GM12878 (cell line): ENCODE measurements at regions of chr11 and their contacts with region 1.

Region 1: GRCh38 chr11:88231894-88232482 is 56.7 kb upstream of the RAB38 start:
- DNase-seq: no peak
- ATAC-seq: peak; percentile 97
- H3K4me3 ChIP-seq: no peak overlapping the region
- H3K27ac ChIP-seq: no peak overlapping the region
- H3K4me1 ChIP-seq: no peaks in the 10 kb centered on the region
- H3K27me3 ChIP-seq: no peaks in the 10 kb centered on the region
- CTCF ChIP-seq: peak; percentile 45 to 68 (median 62)
- EP300 ChIP-seq: no peak
- POLR2A ChIP-seq: no peak
- RAD21 ChIP-seq: peak; percentile 76

Region 2: DNA sequence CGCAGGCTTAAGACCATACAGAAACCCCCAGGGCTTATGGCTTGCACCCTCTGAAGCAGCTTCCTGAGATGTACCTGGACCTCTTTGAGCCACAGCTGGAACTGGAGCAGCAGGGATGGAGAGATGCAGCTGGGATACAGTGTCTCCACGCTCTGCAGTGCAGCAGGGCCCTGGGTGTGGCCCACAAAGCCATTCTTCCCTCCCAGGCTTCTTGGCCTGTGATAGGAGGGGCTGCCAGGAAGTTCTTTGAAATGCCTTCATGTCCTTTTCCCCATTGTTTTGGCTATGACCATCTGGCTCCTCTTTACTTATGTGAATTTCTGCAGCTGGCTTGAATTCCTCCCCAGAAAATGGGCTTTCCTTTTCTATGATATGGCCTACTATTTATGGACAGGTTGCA is 19.7 kb before region 1 on chr11:
- CTCF ChIA-PET with region 1: interaction called, 3 read pairs
- POLR2A ChIA-PET with region 1: no interaction called
- RAD21 ChIA-PET with region 1: interaction called, 3 read pairs
- SMC1A ChIA-PET with region 1: interaction called, 10 read pairs
- in situ Hi-C with region 1: no loop called
- intact Hi-C with region 1: no loop called
- DNase-seq: no peak
- ATAC-seq: no peak
- H3K4me3 ChIP-seq: no peak overlapping the region
- H3K27ac ChIP-seq: no peak overlapping the region
- H3K4me1 ChIP-seq: no peaks in the 10 kb centered on the region
- H3K27me3 ChIP-seq: no peaks in the 10 kb centered on the region
- CTCF ChIP-seq: no peak
- EP300 ChIP-seq: no peak
- POLR2A ChIP-seq: no peak
- RAD21 ChIP-seq: no peak

Region 3: DNA sequence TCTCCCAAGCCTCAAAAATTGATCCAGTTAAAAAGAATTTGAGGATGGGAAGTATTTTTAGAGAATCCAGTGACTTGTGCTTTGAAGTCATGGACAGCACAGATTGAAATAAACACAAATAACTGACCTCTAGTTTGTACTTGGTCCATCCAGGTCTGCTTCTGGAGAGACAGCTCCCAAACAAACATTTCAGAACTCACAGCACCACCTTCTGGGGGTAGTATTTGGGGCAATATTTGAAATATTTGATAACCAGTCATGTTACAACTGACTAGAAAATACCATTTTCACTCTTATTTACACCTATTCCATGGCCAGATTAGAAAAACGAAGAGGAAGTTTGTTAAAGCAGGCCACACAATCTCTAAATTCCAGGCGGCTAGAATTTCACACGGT is 49.3 kb after region 1 on chr11:
- CTCF ChIA-PET with region 1: interaction called, 3 read pairs
- POLR2A ChIA-PET with region 1: no interaction called
- RAD21 ChIA-PET with region 1: interaction called, 5 read pairs
- SMC1A ChIA-PET with region 1: interaction called, 7 read pairs
- in situ Hi-C with region 1: no loop called
- intact Hi-C with region 1: loop called (anchors 5 kb)
- DNase-seq: no peak
- ATAC-seq: peak; percentile 48; the same call in 2 of the 3 replicates
- H3K4me3 ChIP-seq: no peak overlapping the region
- H3K27ac ChIP-seq: no peak overlapping the region
- H3K4me1 ChIP-seq: no peaks in the 10 kb centered on the region
- H3K27me3 ChIP-seq: no peaks in the 10 kb centered on the region
- CTCF ChIP-seq: peak in 2 of 3 experiments; percentile 31 to 39; a peak in 2 of 6 replicates
- EP300 ChIP-seq: no peak
- POLR2A ChIP-seq: no peak
- RAD21 ChIP-seq: peak; percentile 43

Region 4: DNA sequence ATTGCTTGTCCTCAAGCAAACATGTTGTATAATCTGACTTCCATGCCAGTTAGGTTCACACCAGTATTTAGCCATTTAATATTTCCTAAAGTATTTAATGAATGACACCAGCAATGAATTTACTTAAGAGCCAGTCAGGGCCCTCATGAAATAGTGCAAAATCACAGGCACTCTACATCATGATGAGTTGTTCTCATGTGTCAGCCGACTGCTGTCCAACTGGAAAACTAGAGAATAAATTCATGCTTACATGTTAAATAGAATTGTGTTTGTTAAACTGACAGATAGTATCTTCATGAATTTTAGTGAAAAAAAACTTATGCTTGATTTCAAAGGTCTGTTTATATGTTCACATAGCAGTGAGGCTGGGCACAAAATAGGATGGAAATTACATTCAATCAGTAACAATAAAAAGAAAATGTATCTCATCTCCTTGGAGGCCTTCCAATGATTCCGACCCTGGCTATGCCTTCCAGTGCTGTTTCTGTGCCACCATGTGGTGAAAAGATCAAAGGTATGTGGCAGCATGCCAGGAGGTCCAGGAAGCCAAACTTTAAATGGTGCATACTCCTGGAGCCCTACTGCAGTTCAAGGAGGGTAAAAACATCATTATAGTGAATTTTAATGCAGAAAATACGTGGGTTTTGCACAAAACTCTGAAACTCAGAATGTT is 60.3 kb after region 1 on chr11:
- CTCF ChIA-PET with region 1: interaction called, 4 read pairs
- POLR2A ChIA-PET with region 1: interaction called, 3 read pairs
- RAD21 ChIA-PET with region 1: interaction called, 7 read pairs
- SMC1A ChIA-PET with region 1: interaction called, 18 read pairs
- in situ Hi-C with region 1: no loop called
- intact Hi-C with region 1: loop called (anchors 5 kb)
- DNase-seq: no peak
- ATAC-seq: no peak
- H3K4me3 ChIP-seq: no peak overlapping the region
- H3K27ac ChIP-seq: no peak overlapping the region
- H3K4me1 ChIP-seq: peaks cover 22% of the 10 kb centered on the region
- H3K27me3 ChIP-seq: no peaks in the 10 kb centered on the region
- CTCF ChIP-seq: no peak
- EP300 ChIP-seq: no peak
- POLR2A ChIP-seq: no peak
- RAD21 ChIP-seq: no peak

Region 5: GRCh38 chr11:88312628-88313027 is 80.6 kb after region 1 on chr11:
- CTCF ChIA-PET with region 1: no interaction called
- POLR2A ChIA-PET with region 1: no interaction called
- RAD21 ChIA-PET with region 1: no interaction called
- SMC1A ChIA-PET with region 1: no interaction called
- in situ Hi-C with region 1: no loop called
- intact Hi-C with region 1: no loop called
- DNase-seq: no peak
- ATAC-seq: no peak
- H3K4me3 ChIP-seq: no peak overlapping the region
- H3K27ac ChIP-seq: no peak overlapping the region
- H3K4me1 ChIP-seq: peaks cover 9% of the 10 kb centered on the region
- H3K27me3 ChIP-seq: no peaks in the 10 kb centered on the region
- CTCF ChIP-seq: no peak
- EP300 ChIP-seq: no peak
- POLR2A ChIP-seq: no peak
- RAD21 ChIP-seq: no peak

Region 6: DNA sequence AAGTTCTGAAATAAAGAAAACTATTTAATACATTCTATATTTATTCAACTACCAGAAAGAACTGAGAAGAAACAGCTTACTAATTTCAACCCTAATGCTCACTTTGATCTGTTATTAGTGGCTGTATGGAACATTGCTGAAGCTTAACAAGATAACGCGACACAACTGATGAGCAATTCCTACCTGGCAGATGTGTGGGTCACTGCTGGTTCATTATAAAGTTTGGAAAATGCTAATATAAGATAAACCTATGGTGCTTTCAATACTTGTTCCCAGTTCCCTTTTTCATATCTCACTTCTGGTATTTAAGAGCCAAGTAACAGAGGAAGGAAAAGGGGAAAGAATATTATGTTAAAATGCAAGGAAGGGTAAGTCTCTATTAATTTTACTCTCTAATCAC is 95.1 kb after region 1 on chr11:
- CTCF ChIA-PET with region 1: interaction called, 4 read pairs
- POLR2A ChIA-PET with region 1: no interaction called
- RAD21 ChIA-PET with region 1: interaction called, 5 read pairs
- SMC1A ChIA-PET with region 1: interaction called, 16 read pairs
- in situ Hi-C with region 1: no loop called
- intact Hi-C with region 1: loop called (anchors 5 kb)
- DNase-seq: no peak
- ATAC-seq: peak; percentile 44
- H3K4me3 ChIP-seq: peak overlapping the region; percentile 23; the same call in 1 of the 2 replicates
- H3K27ac ChIP-seq: peak overlapping the region; percentile 67; the same call in 1 of the 2 replicates
- H3K4me1 ChIP-seq: peaks cover 42% of the 10 kb centered on the region
- H3K27me3 ChIP-seq: no peaks in the 10 kb centered on the region
- CTCF ChIP-seq: no peak
- EP300 ChIP-seq: peak; percentile 46 to 80; a peak in 1 of 4 replicates
- POLR2A ChIP-seq: no peak
- RAD21 ChIP-seq: no peak

Region 7: DNA sequence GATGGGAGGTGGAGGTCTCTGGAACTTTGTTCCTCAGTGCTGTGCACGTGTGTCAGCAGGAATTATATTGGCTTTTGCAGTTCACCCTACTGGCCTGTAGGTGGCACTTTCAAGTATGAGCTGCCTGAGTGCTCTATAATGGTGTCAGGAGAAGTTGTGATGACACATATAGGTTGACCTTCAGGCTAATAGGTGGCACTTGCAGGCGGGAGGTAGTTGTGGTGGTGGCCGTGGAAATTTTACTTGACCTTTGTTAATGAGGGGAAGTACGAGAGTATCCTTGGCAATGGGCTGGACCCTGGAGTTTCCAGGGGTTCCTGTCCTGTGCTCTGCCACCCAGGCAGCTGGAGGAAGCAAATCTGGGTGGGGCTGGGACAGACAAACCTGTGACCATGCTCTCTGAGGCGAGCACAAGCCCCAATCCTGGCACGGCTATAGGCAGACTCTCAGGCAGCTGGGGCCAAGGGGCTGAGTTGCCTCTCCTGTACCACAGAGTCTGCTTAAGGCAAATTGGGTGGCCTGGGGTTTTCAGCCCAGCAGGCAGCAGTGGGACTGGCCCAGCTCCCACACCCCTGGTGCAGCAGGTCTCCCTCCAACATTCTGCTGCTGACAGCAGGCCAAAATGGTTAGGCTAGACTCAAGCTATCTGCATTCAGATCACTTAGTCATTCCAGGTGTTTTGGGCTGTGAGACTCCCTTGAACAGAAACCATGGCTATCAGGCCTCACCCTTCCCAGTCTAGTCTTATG is 253.1 kb after region 1 on chr11:
- CTCF ChIA-PET with region 1: interaction called, 10 read pairs
- POLR2A ChIA-PET with region 1: no interaction called
- RAD21 ChIA-PET with region 1: interaction called, 4 read pairs
- SMC1A ChIA-PET with region 1: no interaction called
- in situ Hi-C with region 1: no loop called
- intact Hi-C with region 1: no loop called
- DNase-seq: peak; percentile 27
- ATAC-seq: peak; percentile 94
- H3K4me3 ChIP-seq: no peak overlapping the region
- H3K27ac ChIP-seq: no peak overlapping the region
- H3K4me1 ChIP-seq: peaks cover 8% of the 10 kb centered on the region
- H3K27me3 ChIP-seq: no peaks in the 10 kb centered on the region
- CTCF ChIP-seq: peak; percentile 63 to 87 (median 79)
- EP300 ChIP-seq: no peak
- POLR2A ChIP-seq: no peak
- RAD21 ChIP-seq: peak; percentile 61

Region 8: DNA sequence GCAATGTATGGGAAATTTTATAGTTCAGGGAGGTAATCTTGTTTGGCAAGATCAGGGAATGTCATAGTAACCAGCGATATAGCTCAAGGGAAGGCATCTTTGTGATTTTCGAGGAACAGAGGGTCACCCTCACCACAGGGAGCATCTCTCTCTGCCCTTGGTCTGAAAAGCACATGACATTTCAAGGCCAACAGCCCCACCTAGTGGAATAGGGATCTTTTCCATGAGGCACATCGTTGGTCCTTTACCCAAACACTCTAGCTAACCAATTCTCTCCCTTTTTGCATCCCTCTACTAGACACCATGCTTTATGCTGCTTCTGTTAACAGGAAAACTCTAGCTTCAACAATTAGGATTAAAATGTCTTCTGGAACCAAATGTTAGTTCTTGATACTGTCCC is 654.8 kb after region 1 on chr11:
- CTCF ChIA-PET with region 1: no interaction called
- POLR2A ChIA-PET with region 1: no interaction called
- RAD21 ChIA-PET with region 1: interaction called, 3 read pairs
- SMC1A ChIA-PET with region 1: no interaction called
- in situ Hi-C with region 1: no loop called
- intact Hi-C with region 1: loop called (anchors 5 kb)
- DNase-seq: peak; percentile 11
- ATAC-seq: peak; percentile 98
- H3K4me3 ChIP-seq: no peak overlapping the region
- H3K27ac ChIP-seq: no peak overlapping the region
- H3K4me1 ChIP-seq: no peaks in the 10 kb centered on the region
- H3K27me3 ChIP-seq: no peaks in the 10 kb centered on the region
- CTCF ChIP-seq: peak; percentile 62 to 64 (median 62); a peak in 5 of 6 replicates
- EP300 ChIP-seq: no peak
- POLR2A ChIP-seq: no peak
- RAD21 ChIP-seq: peak; percentile 80